ENCODE measurements at regions of chr1 and their contacts with region 1.

Region 1: GRCh38 chr1:17236779-17237560 is 11.9 kb upstream of the PADI3 start:
- DNase-seq: peak; percentile 86
- H3K4me3 ChIP-seq: no peak overlapping the region; a peak in 1 of 4 replicates
- H3K27ac ChIP-seq: no peak overlapping the region
- H3K4me1 ChIP-seq: peaks cover 13 to 28% of the 10 kb centered on the region in 2 experiments; a peak in 2 of 4 replicates
- H3K27me3 ChIP-seq: no peaks in the 10 kb centered on the region
- CTCF ChIP-seq: peak; percentile 89
- EP300 ChIP-seq: no peak
- RAD21 ChIP-seq: peak; percentile 90

Region 2: DNA sequence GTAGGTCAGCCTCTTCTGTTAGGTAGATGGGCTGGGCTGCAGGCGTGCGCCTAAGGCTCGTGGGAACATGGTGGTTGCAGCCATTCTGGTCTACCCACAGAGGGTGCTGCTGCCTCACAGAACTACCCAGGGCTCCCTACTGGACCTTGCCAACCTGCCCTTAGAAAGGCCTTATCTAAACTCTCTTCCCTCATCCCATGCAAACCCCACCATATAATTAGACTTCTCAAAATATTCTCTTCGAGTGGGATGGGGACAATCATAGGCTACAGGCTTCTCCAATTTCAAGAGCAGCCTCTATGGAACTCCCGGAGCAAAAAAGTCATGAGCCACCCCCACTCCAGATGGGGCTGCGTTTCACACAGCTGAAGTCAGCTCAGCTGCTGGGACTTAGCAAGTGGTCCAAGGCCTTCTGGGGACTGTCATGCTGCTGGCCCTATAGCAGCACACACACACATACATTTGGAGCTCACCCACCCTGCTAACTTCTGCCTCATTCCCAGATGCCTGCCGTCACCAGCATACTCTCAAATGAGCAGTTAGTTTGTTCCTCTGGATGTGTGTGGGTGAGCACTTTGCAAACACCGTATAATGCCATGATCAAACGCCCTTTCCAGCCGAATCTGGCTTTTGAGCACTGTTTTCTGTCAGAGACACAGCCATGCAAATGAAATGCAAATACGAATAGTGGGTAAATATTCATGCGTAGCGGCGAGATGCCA is 177.1 kb before region 1 on chr1:
- CTCF ChIA-PET with region 1: interaction called, 10 read pairs
- POLR2A ChIA-PET with region 1: no interaction called
- DNase-seq: peak; percentile 78
- H3K4me3 ChIP-seq: no peak overlapping the region
- H3K27ac ChIP-seq: no peak overlapping the region
- H3K4me1 ChIP-seq: no peaks in the 10 kb centered on the region
- H3K27me3 ChIP-seq: peaks cover 8% of the 10 kb centered on the region; the same call in 1 of the 2 replicates
- CTCF ChIP-seq: peak; percentile 77
- EP300 ChIP-seq: no peak
- RAD21 ChIP-seq: peak; percentile 94

Region 3: DNA sequence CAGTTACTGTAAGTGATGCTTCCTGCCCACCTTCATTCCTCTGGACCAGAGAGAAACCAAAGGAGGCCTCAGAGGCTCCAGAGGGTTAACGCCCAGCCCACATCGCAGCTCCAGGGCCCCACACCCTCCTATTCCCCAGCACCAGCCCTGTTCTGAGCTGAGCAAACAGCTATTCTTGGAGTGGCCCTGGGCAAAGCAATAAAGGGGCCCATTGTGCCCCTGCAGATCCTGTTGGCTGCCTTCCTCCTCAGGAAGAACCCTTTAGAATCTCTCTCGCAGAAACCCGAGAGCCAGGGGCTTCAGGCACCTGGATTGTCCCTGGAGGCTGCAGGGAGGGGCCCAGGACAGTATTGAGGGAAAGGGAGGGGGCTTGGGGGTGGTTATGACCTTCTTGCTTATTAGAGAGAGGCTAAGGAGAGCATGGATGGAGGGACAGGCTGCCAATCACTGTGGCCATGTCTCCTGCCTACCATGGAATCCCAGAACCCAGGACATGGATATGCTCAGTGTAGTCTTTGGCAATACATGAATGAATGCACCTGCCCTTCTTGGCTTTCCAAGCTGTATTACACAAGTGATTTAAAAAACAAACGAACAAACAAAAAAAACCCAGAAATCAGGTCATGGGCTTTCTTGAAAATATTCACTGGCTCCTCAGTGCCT is 126.9 kb before region 1 on chr1:
- CTCF ChIA-PET with region 1: interaction called, 12 read pairs
- POLR2A ChIA-PET with region 1: no interaction called
- DNase-seq: no peak
- H3K4me3 ChIP-seq: no peak overlapping the region
- H3K27ac ChIP-seq: no peak overlapping the region
- H3K4me1 ChIP-seq: peaks cover 0 to 5% of the 10 kb centered on the region in 2 experiments; a peak in 1 of 4 replicates
- H3K27me3 ChIP-seq: no peaks in the 10 kb centered on the region
- CTCF ChIP-seq: no peak
- EP300 ChIP-seq: no peak
- RAD21 ChIP-seq: no peak

Region 4: DNA sequence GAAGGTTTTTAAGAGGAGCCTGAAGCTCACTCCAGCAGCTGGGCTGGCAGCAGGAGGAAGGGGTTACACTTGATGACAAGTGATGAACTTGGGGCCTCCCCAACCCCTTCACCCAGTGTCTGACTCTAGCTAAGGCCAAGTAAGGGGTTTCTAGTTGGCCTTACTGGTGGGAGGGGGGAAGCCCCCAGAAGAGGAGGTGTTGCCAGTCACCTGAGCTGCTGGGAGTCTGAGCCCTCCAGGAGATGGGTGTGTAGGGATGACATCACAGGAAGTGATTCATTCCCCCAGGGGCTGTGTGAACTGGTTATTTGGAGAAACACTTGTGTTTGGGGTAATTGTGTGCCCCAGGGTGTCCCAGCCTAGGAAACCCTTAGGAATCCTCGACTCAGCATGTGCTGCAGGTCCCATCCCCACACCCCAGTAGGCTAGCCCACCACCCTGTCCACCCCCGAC is 29.0 kb before region 1 on chr1:
- CTCF ChIA-PET with region 1: interaction called, 19 read pairs
- POLR2A ChIA-PET with region 1: no interaction called
- DNase-seq: no peak
- H3K4me3 ChIP-seq: no peak overlapping the region
- H3K27ac ChIP-seq: no peak overlapping the region
- H3K4me1 ChIP-seq: peaks cover 7 to 18% of the 10 kb centered on the region in 2 experiments; a peak in 3 of 4 replicates
- H3K27me3 ChIP-seq: no peaks in the 10 kb centered on the region
- CTCF ChIP-seq: no peak
- EP300 ChIP-seq: no peak
- RAD21 ChIP-seq: no peak

Region 5: DNA sequence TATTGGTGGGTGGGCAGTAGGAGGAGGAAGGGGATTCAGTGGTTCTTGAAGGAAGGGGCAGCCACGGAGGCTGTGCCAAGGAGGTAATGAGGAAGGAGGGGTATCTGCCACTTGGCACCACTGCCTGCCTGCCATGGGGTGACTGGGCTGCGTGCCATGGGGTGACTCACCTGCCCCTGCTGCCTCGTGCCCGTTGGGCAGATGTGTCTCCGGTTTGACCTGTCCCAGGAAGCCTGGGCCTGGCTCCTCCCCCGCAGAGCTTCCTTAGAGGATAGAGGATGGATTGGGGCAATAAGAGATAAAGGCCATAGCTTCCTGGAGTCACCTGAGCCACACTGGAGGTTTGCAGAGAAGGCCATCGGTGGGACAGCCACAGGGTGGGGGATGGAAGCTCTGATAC is 13.6 kb after region 1 on chr1:
- CTCF ChIA-PET with region 1: interaction called, 34 read pairs
- POLR2A ChIA-PET with region 1: no interaction called
- DNase-seq: no peak
- H3K4me3 ChIP-seq: no peak overlapping the region
- H3K27ac ChIP-seq: no peak overlapping the region
- H3K4me1 ChIP-seq: peaks cover 4 to 8% of the 10 kb centered on the region in 2 experiments; a peak in 1 of 4 replicates
- H3K27me3 ChIP-seq: no peaks in the 10 kb centered on the region
- CTCF ChIP-seq: no peak
- EP300 ChIP-seq: peak in 1 of 2 experiments; percentile 36; a peak in 1 of 4 replicates
- RAD21 ChIP-seq: no peak

Region 6: GRCh38 chr1:17258116-17258757 is 21.3 kb after region 1 on chr1:
- CTCF ChIA-PET with region 1: interaction called, 17 read pairs
- POLR2A ChIA-PET with region 1: interaction called, 3 read pairs
- DNase-seq: no peak
- H3K4me3 ChIP-seq: no peak overlapping the region
- H3K27ac ChIP-seq: no peak overlapping the region
- H3K4me1 ChIP-seq: no peaks in the 10 kb centered on the region; a peak in 1 of 4 replicates
- H3K27me3 ChIP-seq: no peaks in the 10 kb centered on the region
- CTCF ChIP-seq: no peak
- EP300 ChIP-seq: no peak
- RAD21 ChIP-seq: no peak